ENCODE measurements at regions of chr22 and their contacts with region 1.

Region 1: DNA sequence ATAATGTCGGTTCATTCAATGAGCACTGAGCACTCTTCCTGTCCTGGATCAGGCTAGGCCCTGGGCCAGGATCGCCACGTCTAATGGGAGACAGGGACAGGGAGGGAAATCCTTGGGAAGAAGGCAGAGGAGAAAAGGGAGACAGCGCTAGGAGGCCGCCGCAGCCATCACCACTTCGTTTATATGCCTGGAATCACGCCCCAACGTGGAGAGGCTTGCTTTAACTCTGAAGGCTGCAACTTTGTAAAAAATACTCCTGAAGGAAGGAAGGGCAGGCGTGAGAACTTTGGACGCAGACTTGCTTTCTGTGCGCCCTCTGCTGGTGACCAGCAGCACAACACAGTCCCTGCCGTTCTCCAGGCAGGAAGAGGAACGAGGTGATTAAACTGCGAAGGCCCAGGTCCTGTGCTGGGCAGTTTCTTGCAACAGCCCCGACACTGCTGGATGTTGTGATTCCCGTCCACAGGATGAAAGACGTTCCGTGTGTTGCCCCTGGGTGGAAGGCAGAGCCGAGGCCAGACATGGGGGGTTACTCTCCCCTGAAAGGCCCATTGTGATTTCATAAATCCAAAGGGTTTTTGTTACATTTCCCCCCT is 22.1 kb downstream of the RIBC2 start:
- DNase-seq: peak; percentile 87 to 91 (median 89)
- H3K4me3 ChIP-seq: peak overlapping the region in 1 of 7 experiments; percentile 36
- H3K27ac ChIP-seq: no peak overlapping the region
- H3K4me1 ChIP-seq: peaks cover 0 to 14% (median 9%) of the 10 kb centered on the region in 4 experiments
- H3K27me3 ChIP-seq: peaks cover 0 to 2% (median 0%) of the 10 kb centered on the region in 5 experiments

Region 2: GRCh38 chr22:45268958-45269844 is 166.4 kb before region 1 on chr22:
- CTCF ChIA-PET with region 1: interaction called, 12 read pairs
- POLR2A ChIA-PET with region 1: no interaction called
- DNase-seq: peak; percentile 72 to 90 (median 85)
- H3K4me3 ChIP-seq: peak overlapping the region in 6 of 7 experiments; percentile 65 to 85 (median 70)
- H3K27ac ChIP-seq: no peak overlapping the region
- H3K4me1 ChIP-seq: peaks cover 0 to 15% (median 14%) of the 10 kb centered on the region in 4 experiments
- H3K27me3 ChIP-seq: peaks cover 0 to 17% (median 7%) of the 10 kb centered on the region in 5 experiments

Region 3: DNA sequence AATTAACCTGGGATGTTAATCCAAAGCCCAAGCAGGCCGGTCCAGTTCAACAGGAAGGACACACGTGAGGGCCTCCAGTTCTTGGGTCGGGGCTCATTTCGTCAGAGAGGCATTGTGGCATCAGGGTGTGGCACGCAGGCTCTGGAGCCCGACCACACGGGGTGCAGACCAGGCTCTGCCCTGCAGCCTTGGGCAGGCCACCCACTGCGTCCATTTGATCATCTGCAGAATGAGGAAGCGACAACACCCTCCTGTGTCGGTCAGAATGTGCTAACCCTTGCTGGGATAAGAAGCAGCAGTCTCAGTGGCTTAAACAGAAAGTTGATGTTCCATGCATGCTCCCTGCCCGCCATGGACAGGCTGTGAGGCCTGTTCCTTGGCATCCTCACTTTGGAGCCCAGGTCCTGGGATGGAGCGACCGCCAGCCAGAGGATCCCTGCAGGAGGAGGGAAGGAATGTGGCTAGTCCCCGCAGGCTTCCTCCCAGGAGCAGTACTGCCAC is 11.4 kb before region 1 on chr22:
- CTCF ChIA-PET with region 1: interaction called, 12 read pairs
- POLR2A ChIA-PET with region 1: interaction called, 3 read pairs
- DNase-seq: no peak
- H3K4me3 ChIP-seq: no peak overlapping the region
- H3K27ac ChIP-seq: no peak overlapping the region
- H3K4me1 ChIP-seq: no peaks in the 10 kb centered on the region
- H3K27me3 ChIP-seq: no peaks in the 10 kb centered on the region

Measured in common myeloid progenitor, CD34-positive (primary cell).